ENCODE measurements at regions of chr3 and their contacts with region 1.

Region 1: GRCh38 chr3:17742108-17742879 is at the start of gene TBC1D5:
- DNase-seq: peak; percentile 93
- H3K4me3 Mint-ChIP-seq: peak within 1 kb of the TSS; percentile 88
- H3K27ac Mint-ChIP-seq: peak within 1 kb of the TSS; percentile 82
- H3K4me1 Mint-ChIP-seq: peaks cover 9% of the 10 kb centered on the region
- H3K27me3 Mint-ChIP-seq: no peaks in the 10 kb centered on the region
- CTCF ChIP-seq: no peak
- total RNA-seq, gene TBC1D5: 34.5 and 38.3 TPM in 2 replicates

Region 2: DNA sequence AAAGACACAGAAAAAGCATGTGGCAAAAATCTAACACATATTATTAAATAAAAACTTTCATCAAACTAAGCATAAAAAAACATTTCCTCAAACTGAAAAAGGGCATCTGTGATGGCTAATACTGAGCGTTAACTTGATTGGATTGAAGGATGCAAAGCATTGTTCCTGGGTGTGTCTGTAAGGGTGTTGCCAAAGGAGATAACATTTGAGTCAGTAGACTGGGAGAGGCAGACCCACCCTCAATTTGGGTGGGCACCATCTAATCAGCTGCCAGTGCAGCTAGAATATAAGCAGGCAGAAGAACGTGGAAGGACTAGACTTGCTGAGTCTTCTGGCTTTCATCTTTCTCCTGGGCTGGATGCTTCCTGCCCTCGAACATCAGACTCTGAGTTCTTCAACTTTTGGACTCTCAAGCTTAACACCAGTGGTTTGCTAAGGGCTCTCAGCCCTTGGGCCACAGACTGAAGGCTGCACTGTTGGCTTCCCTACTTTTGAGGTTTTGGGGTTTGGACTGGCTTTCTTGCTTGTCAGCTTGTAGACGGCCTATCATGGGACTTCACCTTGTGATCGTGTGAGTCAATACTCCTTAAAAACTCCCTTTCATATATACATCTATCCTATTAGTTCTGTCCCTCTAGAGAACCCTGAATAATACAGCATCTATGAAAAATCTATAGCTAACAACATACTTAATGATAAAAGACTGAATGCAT is 1182.5 kb before region 1 on chr3:
- CTCF ChIA-PET with region 1: no interaction called
- intact Hi-C with region 1: no loop called
- DNase-seq: no peak
- H3K4me3 Mint-ChIP-seq: no peak overlapping the region
- H3K27ac Mint-ChIP-seq: no peak overlapping the region
- H3K4me1 Mint-ChIP-seq: no peaks in the 10 kb centered on the region
- H3K27me3 Mint-ChIP-seq: no peaks in the 10 kb centered on the region
- CTCF ChIP-seq: no peak

Region 3: DNA sequence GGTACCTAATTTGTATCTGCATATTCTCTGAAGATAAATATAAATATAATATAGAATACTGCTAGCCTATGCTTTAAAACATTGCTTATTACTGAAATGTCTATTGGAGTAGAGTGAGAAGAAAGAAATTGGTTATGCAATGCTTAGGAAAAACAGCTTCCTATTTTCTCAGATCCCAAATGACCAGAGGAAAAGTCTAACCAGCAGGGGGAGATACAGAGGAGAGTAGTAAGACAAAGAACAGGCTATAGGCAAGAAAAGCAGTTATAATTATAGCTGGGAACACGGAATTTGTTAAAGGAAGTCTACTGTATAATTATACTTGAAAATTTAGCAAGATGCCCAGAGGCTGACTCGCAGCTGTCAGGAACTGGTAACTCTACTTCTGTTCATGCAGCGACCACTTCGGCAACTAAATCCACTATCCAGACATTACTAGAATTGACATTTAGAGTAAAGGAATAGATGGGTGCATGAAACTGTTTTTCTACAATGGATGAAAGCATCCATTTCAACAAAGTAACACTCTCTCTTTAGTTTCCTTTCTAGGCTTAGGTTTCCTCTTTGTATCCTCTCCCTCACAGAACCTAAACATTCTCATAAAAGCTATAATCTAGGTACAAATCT is 97.1 kb before region 1 on chr3:
- CTCF ChIA-PET with region 1: interaction called, 8 read pairs
- intact Hi-C with region 1: loop called (anchors 5 kb)
- DNase-seq: peak; percentile 40
- H3K4me3 Mint-ChIP-seq: no peak overlapping the region
- H3K27ac Mint-ChIP-seq: no peak overlapping the region
- H3K4me1 Mint-ChIP-seq: no peaks in the 10 kb centered on the region
- H3K27me3 Mint-ChIP-seq: no peaks in the 10 kb centered on the region
- CTCF ChIP-seq: peak; percentile 48